Dendritic cell treated with granulocyte-macrophage colony-stimulating factor and Interleukin-4, amounts not matched to agents 40 ng/mL and 50 ng/mL, for 4 days (primary cell): ENCODE measurements at regions of chr11 and their contacts with region 1.

Region 1: GRCh38 chr11:14471127-14471526 is 28.5 kb downstream of the COPB1 start:
- H3K4me3 Mint-ChIP-seq: no peak overlapping the region
- H3K27ac Mint-ChIP-seq: no peak overlapping the region
- H3K4me1 Mint-ChIP-seq: no peaks in the 10 kb centered on the region
- H3K27me3 Mint-ChIP-seq: no peaks in the 10 kb centered on the region

Region 2: DNA sequence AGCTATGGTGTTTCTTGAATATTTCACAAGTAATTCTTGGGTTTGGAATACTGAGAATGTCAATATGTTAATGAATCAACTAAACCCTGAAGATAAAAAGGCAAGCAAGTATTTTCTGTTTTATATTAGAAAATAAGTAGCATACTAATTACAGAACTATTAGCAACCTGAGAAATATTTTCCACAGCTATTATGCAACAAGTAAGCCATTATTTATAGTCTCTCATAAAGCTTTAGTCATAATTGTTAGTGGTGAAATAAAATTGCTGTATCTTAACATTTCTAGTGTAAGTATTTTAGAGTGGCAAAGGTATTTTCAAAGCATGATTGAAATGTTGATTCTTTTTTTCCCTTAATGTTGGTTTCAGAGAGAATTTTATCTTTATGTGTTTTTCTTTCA is 749.4 kb before region 1 on chr11:
- intact Hi-C with region 1: loop called (anchors 10 kb)
- H3K4me3 Mint-ChIP-seq: no peak overlapping the region
- H3K27ac Mint-ChIP-seq: no peak overlapping the region
- H3K4me1 Mint-ChIP-seq: no peaks in the 10 kb centered on the region
- H3K27me3 Mint-ChIP-seq: no peaks in the 10 kb centered on the region

Region 3: GRCh38 chr11:14158393-14158792 is 312.7 kb before region 1 on chr11:
- intact Hi-C with region 1: no loop called
- H3K4me3 Mint-ChIP-seq: no peak overlapping the region
- H3K27ac Mint-ChIP-seq: no peak overlapping the region
- H3K4me1 Mint-ChIP-seq: no peaks in the 10 kb centered on the region
- H3K27me3 Mint-ChIP-seq: no peaks in the 10 kb centered on the region